GM12878 (cell line): ENCODE measurements at regions of chr1 and their contacts with region 1.

Region 1: GRCh38 chr1:226736908-226737818 is 1.9 kb downstream of the ITPKB start:
- DNase-seq: no peak
- ATAC-seq: peak; percentile 46
- H3K4me3 ChIP-seq: peak overlapping the region; percentile 98
- H3K27ac ChIP-seq: peak overlapping the region; percentile 87
- H3K4me1 ChIP-seq: peaks cover 36% of the 10 kb centered on the region
- H3K27me3 ChIP-seq: no peaks in the 10 kb centered on the region
- CTCF ChIP-seq: peak in 1 of 3 experiments; percentile 14; a peak in 3 of 6 replicates
- EP300 ChIP-seq: no peak
- POLR2A ChIP-seq: no peak
- RAD21 ChIP-seq: no peak

Region 2: GRCh38 chr1:226634166-226634588 is 103.0 kb before region 1 on chr1:
- CTCF ChIA-PET with region 1: interaction called, 7 read pairs
- POLR2A ChIA-PET with region 1: interaction called, 4 read pairs
- RAD21 ChIA-PET with region 1: interaction called, 16 read pairs
- SMC1A ChIA-PET with region 1: interaction called, 8 read pairs
- in situ Hi-C with region 1: no loop called
- intact Hi-C with region 1: loop called (anchors 2 kb)
- DNase-seq: no peak
- ATAC-seq: peak; percentile 97
- H3K4me3 ChIP-seq: no peak overlapping the region
- H3K27ac ChIP-seq: no peak overlapping the region
- H3K4me1 ChIP-seq: peaks cover 21% of the 10 kb centered on the region
- H3K27me3 ChIP-seq: no peaks in the 10 kb centered on the region
- CTCF ChIP-seq: peak; percentile 85 to 96 (median 95)
- EP300 ChIP-seq: no peak
- POLR2A ChIP-seq: no peak
- RAD21 ChIP-seq: peak; percentile 94

Region 3: GRCh38 chr1:226662642-226663326 is 74.4 kb before region 1 on chr1:
- CTCF ChIA-PET with region 1: interaction called, 9 read pairs
- POLR2A ChIA-PET with region 1: interaction called, 5 read pairs
- RAD21 ChIA-PET with region 1: interaction called, 16 read pairs
- SMC1A ChIA-PET with region 1: interaction called, 11 read pairs
- in situ Hi-C with region 1: no loop called
- intact Hi-C with region 1: loop called (anchors 2 kb)
- DNase-seq: peak; percentile 99
- ATAC-seq: peak; percentile 95
- H3K4me3 ChIP-seq: peak overlapping the region; percentile 5; the same call in 1 of the 2 replicates
- H3K27ac ChIP-seq: peak overlapping the region; percentile 48
- H3K4me1 ChIP-seq: peaks cover 57% of the 10 kb centered on the region
- H3K27me3 ChIP-seq: no peaks in the 10 kb centered on the region
- CTCF ChIP-seq: no peak
- EP300 ChIP-seq: peak; percentile 98
- POLR2A ChIP-seq: no peak
- RAD21 ChIP-seq: peak; percentile 14; the same call in 1 of the 2 replicates

Region 4: GRCh38 chr1:226702957-226703831 is 34.0 kb before region 1 on chr1:
- CTCF ChIA-PET with region 1: interaction called, 3 read pairs
- POLR2A ChIA-PET with region 1: interaction called, 5 read pairs
- RAD21 ChIA-PET with region 1: interaction called, 6 read pairs
- SMC1A ChIA-PET with region 1: interaction called, 13 read pairs
- in situ Hi-C with region 1: no loop called
- intact Hi-C with region 1: no loop called
- DNase-seq: no peak
- ATAC-seq: peak; percentile 92
- H3K4me3 ChIP-seq: peak overlapping the region; percentile 54
- H3K27ac ChIP-seq: peak overlapping the region; percentile 92
- H3K4me1 ChIP-seq: peaks cover 12% of the 10 kb centered on the region
- H3K27me3 ChIP-seq: no peaks in the 10 kb centered on the region
- CTCF ChIP-seq: no peak
- EP300 ChIP-seq: peak in 1 of 2 experiments; percentile 41; a peak in 1 of 4 replicates
- POLR2A ChIP-seq: peak; percentile 93
- RAD21 ChIP-seq: no peak

Region 5: DNA sequence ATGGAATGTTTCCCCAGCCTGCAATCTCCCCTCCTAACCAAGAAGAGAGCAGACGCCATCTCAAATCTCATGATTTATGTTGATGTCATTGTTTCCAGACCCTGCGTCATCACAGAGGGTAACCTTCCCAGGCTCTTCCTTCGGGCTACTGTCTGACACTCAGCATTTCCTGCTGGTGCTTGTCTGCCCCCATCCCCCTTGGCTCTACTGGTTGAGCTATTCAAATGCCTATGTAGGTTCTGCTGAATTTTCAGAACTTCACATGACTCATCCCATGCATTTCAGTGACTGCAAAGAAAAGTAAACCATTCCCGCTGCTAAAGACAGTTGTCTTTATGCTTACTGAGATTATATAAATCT is 26.7 kb after region 1 on chr1:
- CTCF ChIA-PET with region 1: no interaction called
- POLR2A ChIA-PET with region 1: interaction called, 9 read pairs
- RAD21 ChIA-PET with region 1: interaction called, 4 read pairs
- SMC1A ChIA-PET with region 1: interaction called, 16 read pairs
- in situ Hi-C with region 1: no loop called
- intact Hi-C with region 1: no loop called
- DNase-seq: no peak
- ATAC-seq: peak; percentile 71
- H3K4me3 ChIP-seq: 0 out of 2 replicates have a peak overlapping the region, but pooled peaks have one; percentile 35
- H3K27ac ChIP-seq: peak overlapping the region; percentile 16
- H3K4me1 ChIP-seq: peaks cover 31% of the 10 kb centered on the region
- H3K27me3 ChIP-seq: no peaks in the 10 kb centered on the region
- CTCF ChIP-seq: no peak
- EP300 ChIP-seq: no peak
- POLR2A ChIP-seq: no peak
- RAD21 ChIP-seq: no peak

Region 6: DNA sequence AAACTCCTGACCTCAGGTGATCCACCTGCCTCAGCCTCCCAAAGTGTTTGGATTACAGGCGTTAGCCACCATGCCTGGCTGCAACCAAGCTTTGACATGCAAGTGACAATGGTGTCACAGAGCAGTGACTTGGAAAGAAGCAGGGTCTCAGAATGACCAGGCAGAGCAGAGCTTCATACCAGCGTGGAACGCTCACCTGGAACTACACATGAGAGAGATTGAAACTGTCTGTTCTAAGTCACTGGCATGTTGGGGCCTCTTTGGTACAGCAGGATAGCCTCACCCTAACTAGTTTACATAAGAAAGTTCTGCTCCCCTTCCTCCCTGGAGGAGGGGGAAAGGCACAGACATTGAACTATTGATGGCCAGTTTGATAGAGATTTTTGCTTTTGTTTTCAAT is 49.4 kb after region 1 on chr1:
- CTCF ChIA-PET with region 1: interaction called, 3 read pairs
- POLR2A ChIA-PET with region 1: interaction called, 3 read pairs
- RAD21 ChIA-PET with region 1: interaction called, 8 read pairs
- SMC1A ChIA-PET with region 1: interaction called, 8 read pairs
- in situ Hi-C with region 1: no loop called
- intact Hi-C with region 1: loop called (anchors 2 kb)
- DNase-seq: peak; percentile 70
- ATAC-seq: peak; percentile 87
- H3K4me3 ChIP-seq: no peak overlapping the region
- H3K27ac ChIP-seq: peak overlapping the region; percentile 64; the same call in 1 of the 2 replicates
- H3K4me1 ChIP-seq: peaks cover 53% of the 10 kb centered on the region
- H3K27me3 ChIP-seq: no peaks in the 10 kb centered on the region
- CTCF ChIP-seq: no peak
- EP300 ChIP-seq: no peak
- POLR2A ChIP-seq: no peak
- RAD21 ChIP-seq: peak; percentile 23; the same call in 1 of the 2 replicates

Region 7: GRCh38 chr1:226809785-226810571 is 72.8 kb after region 1 on chr1:
- CTCF ChIA-PET with region 1: no interaction called
- POLR2A ChIA-PET with region 1: no interaction called
- RAD21 ChIA-PET with region 1: no interaction called
- SMC1A ChIA-PET with region 1: no interaction called
- in situ Hi-C with region 1: no loop called
- intact Hi-C with region 1: no loop called
- DNase-seq: no peak
- ATAC-seq: no peak
- H3K4me3 ChIP-seq: no peak overlapping the region
- H3K27ac ChIP-seq: no peak overlapping the region
- H3K4me1 ChIP-seq: no peaks in the 10 kb centered on the region
- H3K27me3 ChIP-seq: no peaks in the 10 kb centered on the region; a peak in 1 of 4 replicates
- CTCF ChIP-seq: no peak
- EP300 ChIP-seq: no peak
- POLR2A ChIP-seq: no peak
- RAD21 ChIP-seq: no peak